ENCODE measurements at regions of chr17 and their contacts with region 1.

Region 1: GRCh38 chr17:75046582-75047289 is at the starts of genes ATP5PD and KCTD2:
- DNase-seq: peak; percentile 81 to 97 (median 93)
- ATAC-seq: peak; percentile 91
- H3K4me3 ChIP-seq: peak within 1 kb of the TSS; percentile 99
- H3K4me3 Mint-ChIP-seq: peak within 1 kb of the TSS; percentile 99
- H3K27ac ChIP-seq: peak within 1 kb of the TSS; percentile 93 to 97
- H3K27ac Mint-ChIP-seq: peak within 1 kb of the TSS; percentile 98
- H3K4me1 ChIP-seq: peaks cover 21% of the 10 kb centered on the region
- H3K4me1 Mint-ChIP-seq: peaks cover 54% of the 10 kb centered on the region
- H3K27me3 ChIP-seq: no peaks in the 10 kb centered on the region
- H3K27me3 Mint-ChIP-seq: no peaks in the 10 kb centered on the region
- CTCF ChIP-seq: no peak
- total RNA-seq, gene ATP5PD: 69.9 to 71.6 TPM
- total RNA-seq, gene KCTD2: 29.4 to 31.7 TPM

Region 2: DNA sequence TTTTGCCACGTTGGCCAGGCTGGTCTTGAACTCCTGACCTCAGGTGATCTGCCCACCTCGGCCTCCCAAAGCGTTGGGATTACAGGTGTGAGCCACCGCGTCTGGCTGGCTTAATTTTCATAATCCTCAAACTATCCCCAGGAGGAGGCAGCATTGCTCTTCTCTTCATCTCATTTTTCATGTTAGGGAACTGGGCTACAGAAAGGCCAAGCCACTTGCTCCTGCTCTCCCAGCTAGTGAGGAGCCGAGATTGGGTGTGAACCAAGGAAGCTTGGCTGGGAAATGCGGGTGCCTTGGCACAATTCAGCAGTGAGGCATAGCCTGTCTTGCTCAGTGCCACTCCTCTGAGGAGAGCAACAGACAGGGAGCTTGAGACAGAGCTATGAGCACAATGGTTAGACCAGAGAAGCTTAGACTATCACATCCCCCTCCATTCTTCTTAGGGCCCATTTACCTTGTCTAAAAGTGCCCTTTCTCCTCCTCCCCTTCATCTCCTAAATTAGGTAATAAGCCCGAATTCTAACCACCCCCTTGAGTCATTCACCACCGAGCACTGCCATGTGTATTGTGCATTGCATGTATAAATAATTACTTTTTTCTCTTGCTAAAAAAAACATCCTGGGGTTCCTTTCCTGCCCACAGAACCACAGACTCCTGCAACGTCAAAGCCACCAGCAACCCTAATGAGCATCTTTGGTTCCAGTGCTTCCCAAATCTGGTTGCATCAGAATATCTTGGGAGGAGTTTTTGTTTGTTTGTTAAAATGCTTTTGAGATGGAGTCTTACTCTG is 740.7 kb before region 1 on chr17:
- CTCF ChIA-PET with region 1: no interaction called
- POLR2A ChIA-PET with region 1: no interaction called
- intact Hi-C with region 1: no loop called
- DNase-seq: no peak
- ATAC-seq: no peak
- H3K4me3 ChIP-seq: no peak overlapping the region
- H3K4me3 Mint-ChIP-seq: no peak overlapping the region
- H3K27ac ChIP-seq: no peak overlapping the region
- H3K27ac Mint-ChIP-seq: no peak overlapping the region
- H3K4me1 ChIP-seq: no peaks in the 10 kb centered on the region
- H3K4me1 Mint-ChIP-seq: peaks cover 7% of the 10 kb centered on the region
- H3K27me3 ChIP-seq: no peaks in the 10 kb centered on the region
- H3K27me3 Mint-ChIP-seq: peaks cover 2% of the 10 kb centered on the region
- CTCF ChIP-seq: no peak

Region 3: GRCh38 chr17:74972107-74972972 is 74.4 kb before region 1 on chr17 and contains the start of gene HID1:
- CTCF ChIA-PET with region 1: no interaction called
- POLR2A ChIA-PET with region 1: no interaction called
- intact Hi-C with region 1: loop called in 1 of 2 experiments (anchors 5 kb)
- DNase-seq: peak; percentile 64 to 90 (median 80)
- ATAC-seq: peak; percentile 93
- H3K4me3 ChIP-seq: peak within 1 kb of the TSS; percentile 53 to 69
- H3K4me3 Mint-ChIP-seq: peak within 1 kb of the TSS; percentile 85
- H3K27ac ChIP-seq: peak within 1 kb of the TSS in 1 of 2 experiments; percentile 23
- H3K27ac Mint-ChIP-seq: peak within 1 kb of the TSS; percentile 52
- H3K4me1 ChIP-seq: peaks cover 10% of the 10 kb centered on the region
- H3K4me1 Mint-ChIP-seq: peaks cover 4% of the 10 kb centered on the region
- H3K27me3 ChIP-seq: peaks cover 3 to 9% of the 10 kb centered on the region in 2 experiments
- H3K27me3 Mint-ChIP-seq: peaks cover 11% of the 10 kb centered on the region
- CTCF ChIP-seq: no peak
- total RNA-seq, gene HID1: 25.9 to 26.4 TPM

Region 4: DNA sequence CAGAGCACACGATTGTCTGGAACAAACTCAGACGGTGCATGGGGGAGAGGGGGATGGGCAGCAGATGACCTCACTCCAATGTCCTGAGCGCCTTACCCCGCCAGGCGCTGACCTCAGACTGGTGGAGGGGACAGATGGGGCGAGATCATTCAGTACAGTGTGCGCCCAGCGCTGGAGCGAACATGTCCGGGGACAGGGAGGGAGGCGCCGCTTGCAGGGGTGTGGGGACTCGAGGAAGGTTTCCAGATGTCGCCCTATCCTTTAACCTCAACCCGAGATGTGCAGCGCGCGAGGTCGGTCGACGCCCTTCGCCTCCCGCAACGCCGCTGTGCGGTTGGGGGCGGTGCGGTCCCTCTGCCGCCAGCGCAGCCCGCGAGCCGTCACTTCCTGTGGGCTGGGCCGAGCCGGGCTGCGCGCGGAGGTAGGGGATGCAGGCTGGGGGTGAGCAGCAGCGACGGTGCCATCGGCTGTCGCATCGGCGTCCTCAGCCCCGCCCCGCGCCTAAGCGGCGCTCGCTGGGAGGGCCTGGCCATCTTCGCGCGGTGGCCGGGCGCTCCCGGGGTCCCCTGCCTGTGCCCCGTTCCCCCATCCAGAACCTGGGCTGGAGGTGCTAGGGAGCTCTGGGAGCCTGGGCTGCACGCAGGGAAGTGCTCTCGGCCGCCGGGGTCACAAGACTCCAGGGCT is 64.6 kb before region 1 on chr17:
- CTCF ChIA-PET with region 1: no interaction called
- POLR2A ChIA-PET with region 1: interaction called, 3 read pairs
- intact Hi-C with region 1: loop called in 1 of 2 experiments (anchors 2 kb)
- DNase-seq: peak; percentile 57 to 92 (median 78)
- ATAC-seq: peak; percentile 89
- H3K4me3 ChIP-seq: peak overlapping the region; percentile 66
- H3K4me3 Mint-ChIP-seq: peak overlapping the region; percentile 87
- H3K27ac ChIP-seq: peak overlapping the region; percentile 74 to 76
- H3K27ac Mint-ChIP-seq: peak overlapping the region; percentile 86
- H3K4me1 ChIP-seq: peaks cover 21% of the 10 kb centered on the region
- H3K4me1 Mint-ChIP-seq: peaks cover 21% of the 10 kb centered on the region
- H3K27me3 ChIP-seq: no peaks in the 10 kb centered on the region
- H3K27me3 Mint-ChIP-seq: peaks cover 5% of the 10 kb centered on the region
- CTCF ChIP-seq: no peak

Region 5: DNA sequence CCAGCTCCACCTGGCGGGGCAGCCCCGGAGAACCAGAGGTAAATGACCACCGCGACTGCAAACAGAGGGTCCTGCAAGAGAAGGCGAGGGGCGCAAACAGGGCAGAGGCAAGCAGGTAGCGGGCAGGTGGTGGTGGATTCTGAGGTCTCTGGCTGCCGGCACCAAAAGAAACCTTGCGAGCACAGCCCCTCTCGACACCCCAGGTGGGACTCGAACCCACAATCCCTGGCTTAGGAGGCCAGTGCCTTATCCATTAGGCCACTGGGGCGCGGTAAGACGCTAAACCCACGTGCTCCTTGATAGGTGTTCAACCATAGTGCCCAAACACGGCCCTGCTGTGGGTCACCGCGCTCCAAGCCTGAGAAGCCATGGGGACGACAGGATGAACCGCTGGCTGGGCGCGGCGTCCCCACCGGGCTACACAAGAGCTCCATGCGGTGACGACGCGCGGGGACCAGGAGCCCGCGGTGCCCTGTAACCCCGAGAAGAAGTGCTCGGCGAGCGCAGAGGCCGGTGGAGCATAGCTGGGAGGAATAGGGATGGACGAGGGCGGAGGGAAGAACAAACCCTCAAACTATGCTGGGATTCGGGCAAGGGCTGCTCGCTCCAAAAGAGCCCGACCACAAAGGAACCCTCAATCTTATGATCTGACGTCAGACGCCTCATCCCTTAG is 12.4 kb before region 1 on chr17:
- CTCF ChIA-PET with region 1: interaction called, 4 read pairs
- POLR2A ChIA-PET with region 1: interaction called, 11 read pairs
- intact Hi-C with region 1: loop called (anchors 1 kb)
- DNase-seq: peak; percentile 63 to 87 (median 80)
- ATAC-seq: peak; percentile 17
- H3K4me3 ChIP-seq: peak overlapping the region; percentile 66 to 94
- H3K4me3 Mint-ChIP-seq: peak overlapping the region; percentile 92
- H3K27ac ChIP-seq: peak overlapping the region; percentile 53 to 56
- H3K27ac Mint-ChIP-seq: peak overlapping the region; percentile 98
- H3K4me1 ChIP-seq: peaks cover 45% of the 10 kb centered on the region
- H3K4me1 Mint-ChIP-seq: peaks cover 53% of the 10 kb centered on the region
- H3K27me3 ChIP-seq: no peaks in the 10 kb centered on the region
- H3K27me3 Mint-ChIP-seq: no peaks in the 10 kb centered on the region
- CTCF ChIP-seq: no peak

Region 6: DNA sequence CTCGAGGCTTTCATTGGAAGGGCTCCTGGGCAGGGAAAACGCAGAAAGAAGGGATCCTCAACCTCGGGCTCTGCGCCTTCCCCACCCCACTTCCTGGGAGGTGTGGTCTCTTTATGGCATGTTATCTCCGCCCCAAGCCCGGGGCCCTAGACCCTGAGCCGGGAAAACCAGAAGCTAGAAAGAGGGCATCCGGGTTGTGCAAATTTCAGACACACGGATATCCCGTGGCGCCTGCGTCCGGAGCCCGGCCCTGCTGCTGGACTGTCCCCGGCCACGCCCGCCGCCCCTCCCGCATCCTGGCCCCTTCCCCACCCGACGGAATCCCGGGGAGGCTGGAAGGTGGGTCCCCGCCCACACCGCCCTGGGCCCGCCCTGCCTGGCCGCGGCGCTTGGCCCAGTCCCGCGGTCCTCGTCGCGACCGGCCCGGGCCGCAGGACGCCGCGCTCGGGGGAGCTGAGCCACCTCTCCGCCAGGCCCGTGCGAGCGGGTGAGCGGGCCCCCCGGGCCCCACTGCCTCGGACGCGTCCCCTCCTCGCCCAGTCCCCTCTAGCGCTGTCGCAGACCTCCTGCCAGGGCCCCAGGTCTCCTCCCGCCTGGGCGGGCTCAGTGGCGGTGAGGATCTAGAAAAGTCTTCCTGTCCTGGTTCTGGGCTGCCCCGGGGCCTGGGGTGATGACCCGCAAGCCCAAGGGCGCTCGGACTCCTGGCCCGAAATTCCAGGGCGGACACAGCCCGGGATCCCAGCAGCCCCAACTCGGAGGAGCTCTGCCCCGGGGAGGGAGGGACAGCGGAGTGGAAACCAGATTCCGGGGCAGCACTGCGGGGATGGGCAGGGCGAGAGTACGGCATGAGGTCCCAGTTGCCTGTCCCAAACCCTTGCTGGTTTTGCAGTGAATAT is 41.1 kb after region 1 on chr17 and contains the start of gene SLC16A5:
- CTCF ChIA-PET with region 1: no interaction called
- POLR2A ChIA-PET with region 1: no interaction called
- intact Hi-C with region 1: no loop called
- DNase-seq: peak in 8 of 9 experiments; percentile 31 to 75 (median 50)
- ATAC-seq: peak; percentile 69
- H3K4me3 ChIP-seq: peak within 1 kb of the TSS; percentile 49 to 50
- H3K4me3 Mint-ChIP-seq: peak within 1 kb of the TSS; percentile 83
- H3K27ac ChIP-seq: peak within 1 kb of the TSS; percentile 26 to 27
- H3K27ac Mint-ChIP-seq: peak within 1 kb of the TSS; percentile 45
- H3K4me1 ChIP-seq: peaks cover 38% of the 10 kb centered on the region
- H3K4me1 Mint-ChIP-seq: peaks cover 40% of the 10 kb centered on the region
- H3K27me3 ChIP-seq: no peaks in the 10 kb centered on the region
- H3K27me3 Mint-ChIP-seq: no peaks in the 10 kb centered on the region
- CTCF ChIP-seq: no peak
- total RNA-seq, gene SLC16A5: 2.9 to 3.6 TPM

Measured in CD8-positive, alpha-beta T cell (primary cell).